ENCODE measurements at regions of chr1 and their contacts with region 1.

Region 1: GRCh38 chr1:55277377-55278130 is 62.4 kb upstream of the USP24 start:
- DNase-seq: peak; percentile 69 to 90 (median 85)
- ATAC-seq: peak; percentile 90
- H3K4me3 ChIP-seq: no peak overlapping the region
- H3K4me1 ChIP-seq: peaks cover 7% of the 10 kb centered on the region
- CTCF ChIP-seq: peak; percentile 75

Region 2: DNA sequence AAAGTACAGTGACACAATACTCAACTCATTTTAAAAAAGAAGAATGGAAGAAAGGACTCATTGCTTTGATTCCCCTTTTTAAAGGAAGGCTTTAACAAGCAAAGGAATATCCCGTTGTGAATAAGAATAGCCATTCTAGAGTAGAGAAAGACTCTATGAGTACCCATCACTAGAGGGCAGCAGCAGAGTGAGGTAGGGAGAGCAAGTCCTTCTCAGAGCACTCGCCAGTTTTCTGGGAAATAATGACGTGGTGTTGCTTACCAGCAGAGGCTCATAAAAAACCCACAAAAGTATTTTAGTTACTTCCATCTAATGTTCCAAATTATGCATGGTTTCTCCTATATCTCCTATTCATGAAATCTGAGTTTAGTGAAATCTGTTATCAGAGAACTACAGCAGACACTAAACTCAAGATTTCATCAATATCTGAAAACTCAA is 137.0 kb before region 1 on chr1:
- intact Hi-C with region 1: loop called (anchors 2 to 5 kb)
- DNase-seq: peak in 1 of 3 donors; percentile 89
- ATAC-seq: peak; percentile 97
- H3K4me3 ChIP-seq: no peak overlapping the region
- H3K4me1 ChIP-seq: no peaks in the 10 kb centered on the region
- CTCF ChIP-seq: peak; percentile 40

Region 3: DNA sequence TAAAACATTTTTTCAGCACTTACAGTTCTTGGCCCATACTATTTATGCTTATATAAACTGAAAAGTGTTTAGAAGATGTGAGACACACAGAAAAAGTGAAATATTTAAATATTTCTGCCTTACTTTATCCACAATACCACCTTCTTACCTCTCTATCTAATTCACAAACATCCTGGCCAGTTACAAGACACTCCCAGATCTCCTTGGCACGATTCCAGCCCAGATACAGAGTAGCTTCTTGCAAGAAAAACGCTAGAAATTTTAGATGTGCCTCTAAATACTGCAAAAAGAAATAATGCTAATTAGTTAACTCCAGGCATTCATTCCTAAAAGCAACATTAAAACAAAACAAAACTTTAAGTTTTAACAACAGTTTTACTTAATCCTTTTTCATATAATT is 130.8 kb before region 1 on chr1:
- intact Hi-C with region 1: loop called (anchors 2 to 5 kb)
- DNase-seq: peak in 1 of 3 donors; percentile 68
- ATAC-seq: no peak
- H3K4me3 ChIP-seq: no peak overlapping the region
- H3K4me1 ChIP-seq: peaks cover 5% of the 10 kb centered on the region
- CTCF ChIP-seq: no peak

Region 4: DNA sequence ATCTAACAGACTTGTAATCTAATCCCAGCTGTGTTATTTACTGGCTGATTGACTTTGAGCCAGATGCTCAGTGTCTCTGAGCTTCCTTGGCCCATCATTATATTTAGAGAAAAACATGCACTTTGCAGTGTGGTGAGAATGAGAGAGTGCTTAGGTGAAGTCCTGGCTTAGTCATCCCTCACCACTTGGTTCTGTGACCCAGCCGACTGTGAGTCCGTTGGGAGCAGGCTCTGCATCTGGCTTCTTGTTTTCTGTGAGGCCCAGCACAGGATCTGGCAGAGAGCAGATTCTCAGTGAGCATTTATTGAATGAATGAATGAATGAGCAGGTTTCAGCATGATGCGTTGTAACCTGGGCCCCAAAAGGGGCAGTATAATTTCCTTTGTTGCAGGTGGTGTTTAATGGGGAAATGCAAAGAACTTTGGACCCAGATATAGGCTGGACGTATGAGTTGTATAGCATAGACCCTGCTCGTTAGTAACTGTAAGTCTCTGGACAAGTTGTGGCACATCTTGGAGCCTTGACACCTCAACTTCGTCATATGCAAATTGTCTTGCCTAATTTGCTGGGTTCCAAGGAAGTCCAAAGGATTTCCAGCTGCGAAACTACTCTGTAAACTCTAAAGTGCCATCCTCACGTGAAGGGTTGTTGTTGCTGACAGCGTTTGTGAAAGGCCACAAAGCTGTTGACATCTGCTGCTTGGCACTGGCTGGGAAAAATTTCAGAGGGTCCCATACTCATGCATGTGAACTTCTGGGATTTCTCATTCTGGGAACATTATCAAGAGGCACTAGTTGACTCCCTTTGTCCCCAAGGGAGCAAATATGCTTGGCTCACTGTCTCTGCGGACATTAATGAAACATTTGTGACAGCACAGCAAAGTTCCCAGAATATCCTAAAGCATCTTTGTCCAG is 76.4 kb after region 1 on chr1:
- intact Hi-C with region 1: no loop called
- DNase-seq: no peak
- ATAC-seq: peak; percentile 34
- H3K4me3 ChIP-seq: no peak overlapping the region
- H3K4me1 ChIP-seq: no peaks in the 10 kb centered on the region
- CTCF ChIP-seq: no peak

Measured in mucosa of descending colon (tissue), 3 donors.